Esophagus squamous epithelium (tissue), 5 donors: ENCODE measurements at regions of chr18 and their contacts with region 1.

Region 1: DNA sequence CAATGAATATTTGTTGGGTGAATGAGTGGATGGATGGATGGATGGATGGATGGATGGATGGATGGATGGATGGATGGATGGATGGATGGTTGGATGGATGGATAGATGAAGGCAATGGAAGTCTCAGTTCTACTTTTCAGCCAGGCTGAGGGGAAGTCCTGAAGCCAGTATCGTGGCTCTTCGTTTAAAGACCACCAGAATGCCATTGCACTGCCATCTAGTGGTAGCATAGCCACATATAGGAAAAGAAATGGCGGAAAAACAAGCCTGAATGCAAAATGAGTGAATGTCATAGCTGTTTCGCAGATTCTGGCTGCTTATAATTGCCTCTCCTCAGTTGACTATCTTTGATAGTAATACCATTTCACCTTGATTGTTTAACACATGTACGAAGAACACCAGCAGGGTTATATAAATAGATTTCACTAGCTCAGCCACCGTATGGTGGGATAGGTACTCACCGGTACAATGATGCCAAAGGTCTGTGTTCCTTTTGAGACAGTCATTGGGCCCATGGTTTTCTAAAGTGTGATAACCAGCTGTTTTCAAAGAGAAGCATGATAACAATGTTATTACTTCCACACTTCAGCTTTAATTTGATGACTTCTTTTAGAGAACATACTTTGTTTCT is 62.3 kb upstream of the GREB1L start:
- DNase-seq: no peak
- H3K4me3 ChIP-seq: no peak overlapping the region
- H3K27ac ChIP-seq: no peak overlapping the region
- H3K4me1 ChIP-seq: no peaks in the 10 kb centered on the region
- H3K27me3 ChIP-seq: no peaks in the 10 kb centered on the region
- CTCF ChIP-seq: peak; percentile 44 to 72 (median 57)
- POLR2A ChIP-seq: no peak

Region 2: GRCh38 chr18:21064347-21064746 is 115.4 kb before region 1 on chr18:
- intact Hi-C with region 1: no loop called
- DNase-seq: no peak
- H3K4me3 ChIP-seq: no peak overlapping the region
- H3K27ac ChIP-seq: no peak overlapping the region
- H3K4me1 ChIP-seq: no peaks in the 10 kb centered on the region
- H3K27me3 ChIP-seq: no peaks in the 10 kb centered on the region
- CTCF ChIP-seq: no peak
- POLR2A ChIP-seq: no peak

Region 3: DNA sequence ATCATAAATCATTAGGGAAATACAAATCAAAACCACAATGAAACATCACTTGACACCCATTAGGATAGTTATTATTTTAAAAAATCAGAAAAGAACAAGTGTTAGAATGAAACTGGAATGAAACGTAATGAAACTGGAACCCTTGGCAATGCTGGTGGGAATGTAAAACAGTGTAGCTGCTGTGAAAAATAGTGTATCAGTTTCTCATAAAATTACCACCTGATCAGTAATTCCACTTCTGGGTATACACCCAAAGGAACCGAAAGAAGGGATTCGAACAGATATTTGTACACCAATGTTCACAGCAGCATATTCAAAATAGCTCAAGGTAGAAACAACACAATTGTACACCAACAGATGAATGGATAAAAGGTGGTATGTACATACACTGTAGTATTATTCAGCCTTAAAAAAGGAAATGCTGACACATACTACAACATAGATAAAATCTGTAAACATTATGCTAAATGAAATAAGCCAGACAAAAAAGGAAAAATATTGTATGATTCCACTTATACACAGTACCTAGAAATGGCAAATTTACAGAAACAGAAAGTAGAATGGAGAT is 95.1 kb before region 1 on chr18:
- intact Hi-C with region 1: loop called (anchors 5 kb)
- DNase-seq: no peak
- H3K4me3 ChIP-seq: no peak overlapping the region
- H3K27ac ChIP-seq: no peak overlapping the region
- H3K4me1 ChIP-seq: peaks cover 0 to 6% (median 0%) of the 10 kb centered on the region in 3 donors
- H3K27me3 ChIP-seq: no peaks in the 10 kb centered on the region
- CTCF ChIP-seq: no peak
- POLR2A ChIP-seq: no peak

Region 4: GRCh38 chr18:21242141-21242779 is 62.6 kb after region 1 on chr18 and contains the start of gene GREB1L:
- intact Hi-C with region 1: no loop called
- DNase-seq: no peak
- H3K4me3 ChIP-seq: peak within 1 kb of the TSS; percentile 16 to 70 (median 39)
- H3K27ac ChIP-seq: no peak within 1 kb of the TSS
- H3K4me1 ChIP-seq: peaks cover 0 to 24% (median 15%) of the 10 kb centered on the region in 3 donors
- H3K27me3 ChIP-seq: peaks cover 0 to 81% (median 14%) of the 10 kb centered on the region in 4 donors
- CTCF ChIP-seq: no peak
- POLR2A ChIP-seq: no peak
- total RNA-seq, gene GREB1L: 0.12 to 0.95 (median 0.66) TPM in 3 of 4 donors, not detected in the other